GM12878 (cell line): ENCODE measurements at regions of chr2 and their contacts with region 1.

Region 1: GRCh38 chr2:47174733-47175361 is 19.7 kb upstream of the STPG4 start:
- DNase-seq: no peak
- ATAC-seq: peak; percentile 37
- H3K4me3 ChIP-seq: peak overlapping the region; percentile 98
- H3K27ac ChIP-seq: peak overlapping the region; percentile 100
- H3K4me1 ChIP-seq: peaks cover 7% of the 10 kb centered on the region
- H3K27me3 ChIP-seq: no peaks in the 10 kb centered on the region
- CTCF ChIP-seq: no peak
- EP300 ChIP-seq: no peak
- POLR2A ChIP-seq: no peak
- RAD21 ChIP-seq: no peak

Region 2: DNA sequence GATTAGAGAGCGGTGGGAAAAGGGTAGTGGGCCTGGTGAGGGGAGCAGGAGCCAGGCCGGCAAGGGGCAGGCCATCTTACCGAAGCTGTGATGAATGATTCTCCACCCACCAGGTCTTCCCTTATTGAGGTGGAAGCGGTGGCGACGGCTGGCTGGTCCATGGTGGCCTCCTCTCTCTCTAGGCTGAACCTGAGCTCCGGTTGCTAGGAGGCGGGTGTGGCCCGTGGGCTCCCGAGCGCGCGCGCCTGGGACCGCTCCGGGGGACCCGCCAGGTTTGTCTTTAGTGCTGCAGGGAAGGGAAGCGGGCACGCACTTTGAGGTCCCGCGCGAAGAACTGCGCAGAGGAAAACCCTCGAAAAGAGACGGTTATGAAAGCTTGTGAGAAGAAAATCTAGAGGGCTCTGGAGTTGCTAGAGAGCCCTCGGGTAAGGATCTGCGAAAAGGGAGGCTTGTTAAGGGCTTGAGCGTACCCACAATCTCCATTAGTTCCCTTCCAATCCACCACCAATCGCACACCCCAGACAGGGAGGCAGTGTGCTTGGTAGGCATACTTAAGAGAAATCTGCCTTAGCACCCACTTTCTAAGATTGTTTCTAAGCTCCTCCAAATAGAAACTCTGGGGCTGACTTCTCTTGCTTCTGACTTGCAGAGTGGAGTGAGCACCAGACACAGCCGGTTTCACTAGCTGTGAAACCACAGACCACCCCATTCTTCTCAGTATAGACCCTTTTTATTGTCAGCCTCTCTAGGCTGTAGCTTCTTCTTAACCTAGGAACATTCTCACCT is 19.6 kb before region 1 on chr2 and contains the start of gene STPG4:
- CTCF ChIA-PET with region 1: interaction called, 5 read pairs
- POLR2A ChIA-PET with region 1: interaction called, 11 read pairs
- RAD21 ChIA-PET with region 1: interaction called, 17 read pairs
- SMC1A ChIA-PET with region 1: interaction called, 30 read pairs
- in situ Hi-C with region 1: no loop called
- intact Hi-C with region 1: no loop called
- DNase-seq: no peak
- ATAC-seq: peak; percentile 63
- H3K4me3 ChIP-seq: no peak within 1 kb of the TSS
- H3K27ac ChIP-seq: peak within 1 kb of the TSS; percentile 22
- H3K4me1 ChIP-seq: 0 out of 2 replicates have a peak, but pooled peaks cover 8% of the 10 kb centered on the region
- H3K27me3 ChIP-seq: no peaks in the 10 kb centered on the region
- CTCF ChIP-seq: no peak
- EP300 ChIP-seq: no peak
- POLR2A ChIP-seq: no peak
- RAD21 ChIP-seq: no peak
- polyA plus RNA-seq, gene STPG4: not detected

Region 3: GRCh38 chr2:47205576-47206141 is 30.8 kb after region 1 on chr2:
- CTCF ChIA-PET with region 1: no interaction called
- POLR2A ChIA-PET with region 1: no interaction called
- RAD21 ChIA-PET with region 1: no interaction called
- SMC1A ChIA-PET with region 1: no interaction called
- in situ Hi-C with region 1: no loop called
- intact Hi-C with region 1: no loop called
- DNase-seq: no peak
- ATAC-seq: no peak
- H3K4me3 ChIP-seq: no peak overlapping the region
- H3K27ac ChIP-seq: no peak overlapping the region
- H3K4me1 ChIP-seq: no peaks in the 10 kb centered on the region; the same call in 1 of the 2 replicates
- H3K27me3 ChIP-seq: no peaks in the 10 kb centered on the region
- CTCF ChIP-seq: no peak
- EP300 ChIP-seq: no peak
- POLR2A ChIP-seq: no peak
- RAD21 ChIP-seq: no peak